Activated CD4-positive, alpha-beta memory T cell treated with anti-CD3 and anti-CD28 coated beads for 36 hours (primary cell): ENCODE measurements at regions of chr16 and their contacts with region 1.

Region 1: GRCh38 chr16:30024451-30024850 is 1.5 kb downstream of the C16orf92 start:
- DNase-seq: no peak
- H3K4me3 Mint-ChIP-seq: no peak overlapping the region
- H3K27ac Mint-ChIP-seq: no peak overlapping the region
- H3K4me1 Mint-ChIP-seq: peaks cover 4% of the 10 kb centered on the region
- H3K27me3 Mint-ChIP-seq: peaks cover 34% of the 10 kb centered on the region

Region 2: GRCh38 chr16:29862884-29863668 is 161.4 kb before region 1 on chr16 and contains the start of gene CDIPT:
- CTCF ChIA-PET with region 1: no interaction called
- POLR2A ChIA-PET with region 1: no interaction called
- intact Hi-C with region 1: loop called (anchors 5 kb)
- DNase-seq: peak; percentile 95
- H3K4me3 Mint-ChIP-seq: peak within 1 kb of the TSS; percentile 94
- H3K27ac Mint-ChIP-seq: peak within 1 kb of the TSS; percentile 92
- H3K4me1 Mint-ChIP-seq: peaks cover 18% of the 10 kb centered on the region
- H3K27me3 Mint-ChIP-seq: no peaks in the 10 kb centered on the region
- total RNA-seq, gene CDIPT: 39.5 to 43.9 TPM

Region 3: DNA sequence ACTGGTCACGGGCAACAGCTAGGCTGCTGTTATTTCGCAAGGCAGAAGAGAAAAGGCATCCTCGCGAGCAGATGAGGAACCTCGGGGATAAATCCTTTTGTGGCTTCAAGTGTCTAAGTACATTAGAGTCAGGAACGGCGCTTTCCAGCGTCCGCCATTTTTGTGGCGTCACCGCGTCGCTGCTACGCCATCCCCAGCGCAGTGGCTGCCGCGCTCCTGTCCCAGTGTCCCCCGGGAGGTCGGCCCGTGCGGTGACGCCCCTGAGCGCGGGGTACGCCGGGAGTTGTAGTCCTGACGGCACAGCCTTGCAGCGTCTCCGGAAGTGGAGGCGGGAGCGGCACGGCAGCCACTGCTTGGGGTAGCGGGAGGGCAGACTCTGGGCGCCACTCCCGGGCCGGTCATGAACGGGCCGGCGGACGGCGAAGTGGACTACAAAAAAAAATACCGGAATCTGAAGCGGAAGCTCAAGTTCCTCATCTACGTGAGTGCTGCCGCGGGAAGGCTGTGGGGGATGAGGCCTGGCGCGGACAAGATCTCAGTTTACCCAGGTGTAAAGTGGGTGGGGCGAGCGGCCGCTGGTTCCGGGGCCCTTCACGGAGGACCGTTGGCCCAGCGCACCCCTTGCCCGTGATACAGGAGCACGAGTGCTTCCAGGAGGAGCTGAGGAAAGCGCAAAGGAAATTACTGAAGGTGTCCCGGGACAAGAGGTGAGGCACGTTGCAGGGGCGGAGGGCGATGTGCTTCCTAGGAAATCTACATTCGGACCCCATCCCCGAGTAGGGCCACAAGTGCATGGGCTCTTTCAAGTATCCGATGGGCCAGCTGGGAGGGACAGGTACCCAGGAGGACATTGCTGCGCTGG is 28.3 kb before region 1 on chr16 and contains the start of gene INO80E:
- CTCF ChIA-PET with region 1: no interaction called
- POLR2A ChIA-PET with region 1: no interaction called
- intact Hi-C with region 1: no loop called
- DNase-seq: peak; percentile 100
- H3K4me3 Mint-ChIP-seq: peak within 1 kb of the TSS; percentile 99
- H3K27ac Mint-ChIP-seq: peak within 1 kb of the TSS; percentile 99
- H3K4me1 Mint-ChIP-seq: peaks cover 33% of the 10 kb centered on the region
- H3K27me3 Mint-ChIP-seq: no peaks in the 10 kb centered on the region
- total RNA-seq, gene INO80E: 84.1 to 94.0 TPM